Activated CD4-positive, alpha-beta memory T cell treated with anti-CD3 and anti-CD28 coated beads for 36 hours (primary cell): ENCODE measurements at regions of chr20 and their contacts with region 1.

Region 1: GRCh38 chr20:1212607-1213396 is 9.5 kb downstream of the C20orf202 start:
- DNase-seq: peak; percentile 84
- H3K4me3 Mint-ChIP-seq: no peak overlapping the region
- H3K27ac Mint-ChIP-seq: no peak overlapping the region
- H3K4me1 Mint-ChIP-seq: peaks cover 33% of the 10 kb centered on the region
- H3K27me3 Mint-ChIP-seq: no peaks in the 10 kb centered on the region

Region 2: GRCh38 chr20:973785-974194 is 239.0 kb before region 1 on chr20:
- CTCF ChIA-PET with region 1: interaction called, 6 read pairs
- POLR2A ChIA-PET with region 1: no interaction called
- intact Hi-C with region 1: loop called (anchors 2 kb)
- DNase-seq: peak; percentile 54
- H3K4me3 Mint-ChIP-seq: no peak overlapping the region
- H3K27ac Mint-ChIP-seq: no peak overlapping the region
- H3K4me1 Mint-ChIP-seq: peaks cover 2% of the 10 kb centered on the region
- H3K27me3 Mint-ChIP-seq: no peaks in the 10 kb centered on the region

Region 3: GRCh38 chr20:1118336-1119127 is 94.3 kb before region 1 on chr20 and contains the start of gene PSMF1:
- CTCF ChIA-PET with region 1: interaction called, 7 read pairs
- POLR2A ChIA-PET with region 1: no interaction called
- intact Hi-C with region 1: loop called (anchors 2 kb)
- DNase-seq: peak; percentile 97
- H3K4me3 Mint-ChIP-seq: peak within 1 kb of the TSS; percentile 89
- H3K27ac Mint-ChIP-seq: peak within 1 kb of the TSS; percentile 84
- H3K4me1 Mint-ChIP-seq: peaks cover 57% of the 10 kb centered on the region
- H3K27me3 Mint-ChIP-seq: no peaks in the 10 kb centered on the region
- total RNA-seq, gene PSMF1: 140 to 149 TPM

Region 4: DNA sequence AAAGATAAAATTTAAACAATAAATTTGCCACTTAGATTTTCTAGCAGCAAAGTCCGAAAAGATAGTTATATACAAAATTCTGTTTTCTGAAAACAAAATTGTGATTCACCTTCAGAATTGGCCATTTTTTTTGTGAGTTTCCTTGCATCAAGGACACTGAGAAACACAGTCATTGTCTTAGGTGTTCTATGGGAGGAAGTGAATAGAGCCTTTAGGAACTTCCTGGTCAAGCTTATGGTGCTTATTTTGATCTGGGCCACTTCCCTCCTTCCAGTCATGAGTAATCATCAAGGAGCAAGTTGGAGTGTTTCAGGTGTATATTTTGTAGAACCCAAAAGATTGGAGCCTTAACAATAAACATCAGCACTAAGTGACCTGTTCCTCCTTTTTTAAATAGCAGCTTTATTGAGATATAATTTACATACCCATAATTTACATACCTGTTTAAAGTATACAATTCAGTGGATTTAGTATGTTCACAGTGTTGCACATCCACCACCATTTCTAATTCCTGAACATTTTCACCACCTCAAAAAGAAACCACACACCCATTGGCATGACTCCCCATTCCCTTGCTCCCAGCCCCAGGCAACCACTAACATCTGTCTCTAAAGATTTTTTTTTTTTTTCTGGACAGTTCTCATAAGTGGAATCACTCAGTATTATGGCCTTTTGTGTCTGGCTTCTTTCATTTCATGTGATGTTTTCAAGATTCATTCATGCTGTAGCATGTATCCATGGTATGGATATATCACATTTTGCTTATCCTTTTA is 45.7 kb before region 1 on chr20:
- CTCF ChIA-PET with region 1: no interaction called
- POLR2A ChIA-PET with region 1: no interaction called
- intact Hi-C with region 1: no loop called
- DNase-seq: no peak
- H3K4me3 Mint-ChIP-seq: no peak overlapping the region
- H3K27ac Mint-ChIP-seq: no peak overlapping the region
- H3K4me1 Mint-ChIP-seq: no peaks in the 10 kb centered on the region
- H3K27me3 Mint-ChIP-seq: no peaks in the 10 kb centered on the region

Region 5: DNA sequence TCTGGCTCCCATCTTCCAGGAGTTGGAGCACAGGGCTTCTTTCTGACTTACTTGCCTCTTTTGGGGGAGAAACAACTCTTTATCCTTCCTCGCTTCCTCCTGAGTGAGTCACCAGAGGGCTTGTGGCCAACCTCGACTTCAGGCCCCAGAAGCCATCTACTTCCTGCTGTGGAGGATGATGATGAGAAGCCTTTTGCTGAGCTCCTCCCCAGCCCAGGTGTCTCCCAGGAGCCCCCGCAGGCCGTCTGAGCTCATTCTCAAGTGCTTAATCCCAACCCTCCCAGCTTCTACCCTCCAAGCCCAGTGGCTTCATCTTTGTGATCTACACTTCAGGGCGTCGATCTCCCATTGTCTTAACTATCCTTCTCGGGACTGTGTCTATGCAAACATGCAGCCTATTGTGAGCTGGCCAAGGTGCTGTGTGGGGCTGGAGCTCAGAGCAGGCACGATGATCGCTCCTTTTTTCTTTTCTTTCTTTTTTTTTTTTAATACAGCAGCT is 88.3 kb after region 1 on chr20:
- CTCF ChIA-PET with region 1: no interaction called
- POLR2A ChIA-PET with region 1: no interaction called
- intact Hi-C with region 1: loop called (anchors 10 kb)
- DNase-seq: peak; percentile 77
- H3K4me3 Mint-ChIP-seq: peak overlapping the region; percentile 14
- H3K27ac Mint-ChIP-seq: peak overlapping the region; percentile 73
- H3K4me1 Mint-ChIP-seq: peaks cover 16% of the 10 kb centered on the region
- H3K27me3 Mint-ChIP-seq: no peaks in the 10 kb centered on the region